Activated CD4-positive, alpha-beta memory T cell treated with anti-CD3 and anti-CD28 coated beads for 36 hours (primary cell): ENCODE measurements at regions of chr3 and their contacts with region 1.

Region 1: DNA sequence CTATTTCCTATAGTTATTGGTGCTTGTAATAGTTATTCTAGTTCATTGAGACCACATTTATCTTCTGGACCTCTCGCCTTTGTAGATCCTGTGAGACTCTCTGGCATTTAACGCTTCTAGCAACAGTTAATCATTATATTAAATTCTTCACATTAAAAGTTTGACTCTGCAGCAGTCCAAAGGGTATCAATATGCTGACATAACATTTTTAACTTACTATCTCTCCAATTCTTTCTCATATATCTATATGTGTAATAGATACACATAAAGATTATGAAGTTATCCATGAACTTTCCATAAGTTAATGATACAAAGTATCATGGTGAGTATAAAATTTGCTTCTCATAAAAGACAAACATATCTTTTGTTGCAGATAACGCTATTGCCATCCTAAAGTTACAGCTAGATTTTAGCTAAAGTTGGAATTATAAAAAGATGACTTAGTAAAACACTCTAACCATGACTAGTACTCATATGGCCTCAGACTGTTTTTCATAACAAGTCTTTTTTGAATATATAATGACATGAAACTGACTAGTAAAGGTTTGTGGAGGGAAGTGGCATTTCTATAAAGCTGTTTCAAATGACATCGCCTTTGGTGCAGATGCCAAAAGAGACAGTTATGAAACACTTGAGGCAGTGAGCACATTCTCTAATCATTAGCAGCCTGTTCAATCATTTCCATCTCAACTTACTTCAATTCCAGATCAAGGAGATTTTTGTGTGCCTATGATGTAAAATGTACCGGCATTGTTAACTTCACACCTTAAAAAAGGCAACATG is 379.3 kb upstream of the CBLB start:
- DNase-seq: no peak
- H3K4me3 Mint-ChIP-seq: no peak overlapping the region
- H3K27ac Mint-ChIP-seq: no peak overlapping the region
- H3K4me1 Mint-ChIP-seq: peaks cover 11% of the 10 kb centered on the region
- H3K27me3 Mint-ChIP-seq: no peaks in the 10 kb centered on the region

Region 2: GRCh38 chr3:106232956-106233355 is 15.1 kb before region 1 on chr3:
- CTCF ChIA-PET with region 1: no interaction called
- POLR2A ChIA-PET with region 1: no interaction called
- intact Hi-C with region 1: loop called (anchors 2 kb)
- DNase-seq: no peak
- H3K4me3 Mint-ChIP-seq: no peak overlapping the region
- H3K27ac Mint-ChIP-seq: no peak overlapping the region
- H3K4me1 Mint-ChIP-seq: peaks cover 42% of the 10 kb centered on the region
- H3K27me3 Mint-ChIP-seq: no peaks in the 10 kb centered on the region

Region 3: DNA sequence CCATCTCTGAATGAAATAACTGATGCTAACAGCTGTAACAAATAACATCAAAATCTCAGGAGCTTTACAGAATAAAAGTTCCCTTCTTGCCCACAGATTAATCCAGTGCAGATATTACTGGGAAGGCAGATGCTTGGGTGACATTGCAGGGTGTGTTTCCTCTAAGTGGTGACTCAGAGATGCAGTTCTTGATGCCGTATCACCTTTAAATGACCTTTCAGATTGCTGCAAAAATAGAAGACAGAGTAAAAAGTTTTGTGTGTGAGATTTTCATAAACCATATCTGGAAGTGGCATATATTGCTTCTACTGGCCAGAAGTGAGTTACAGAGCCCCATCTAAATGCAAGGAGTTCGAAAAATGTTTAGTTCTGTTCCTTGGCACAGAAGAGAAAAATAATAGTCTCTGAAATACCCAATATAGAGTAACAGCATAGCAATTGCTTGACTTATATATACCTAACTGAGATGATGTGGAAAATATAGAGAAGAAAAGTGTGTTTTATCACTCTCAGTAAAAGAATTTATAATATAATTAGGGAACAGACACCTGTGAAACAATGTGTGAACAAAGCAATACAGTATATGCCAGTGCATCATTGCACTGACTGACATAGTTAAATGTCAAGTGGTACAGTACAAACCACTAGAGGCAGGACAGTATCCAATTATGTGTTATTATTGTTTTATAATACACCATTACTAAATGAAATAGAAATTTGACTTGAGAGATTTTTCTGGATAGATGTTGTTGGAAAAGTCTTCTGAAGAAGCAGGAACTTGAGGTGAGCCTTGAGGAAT is 51.4 kb after region 1 on chr3:
- CTCF ChIA-PET with region 1: no interaction called
- POLR2A ChIA-PET with region 1: no interaction called
- intact Hi-C with region 1: loop called (anchors 5 kb)
- DNase-seq: peak; percentile 30
- H3K4me3 Mint-ChIP-seq: no peak overlapping the region
- H3K27ac Mint-ChIP-seq: peak overlapping the region; percentile 53
- H3K4me1 Mint-ChIP-seq: peaks cover 50% of the 10 kb centered on the region
- H3K27me3 Mint-ChIP-seq: no peaks in the 10 kb centered on the region